ENCODE measurements at regions of chr20 and their contacts with region 1.

Region 1: DNA sequence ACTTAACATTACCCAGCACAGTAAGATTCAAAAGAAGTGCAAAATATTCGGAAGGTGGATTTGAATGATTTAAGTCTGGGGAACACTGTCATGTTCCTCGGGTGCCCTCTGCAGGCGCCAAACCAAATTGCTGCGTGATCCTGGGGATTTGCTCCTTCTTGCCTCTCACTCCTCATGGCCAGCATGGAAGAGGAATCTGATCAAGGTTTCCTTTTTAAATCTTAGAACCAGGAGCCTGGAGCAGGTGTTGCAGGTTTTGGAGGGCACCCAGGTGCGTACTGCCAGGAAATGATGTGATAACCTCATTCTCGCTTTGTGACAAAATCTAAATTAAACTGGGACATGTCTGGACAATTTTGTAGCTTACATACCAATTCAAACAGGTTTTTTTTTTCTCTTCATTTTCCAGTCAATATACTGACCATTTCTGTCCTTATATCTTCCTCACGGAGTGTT is 8.1 kb upstream of the PFDN4 start:
- DNase-seq: peak; percentile 81
- ATAC-seq: peak; percentile 76
- H3K4me3 Mint-ChIP-seq: no peak overlapping the region
- H3K27ac Mint-ChIP-seq: no peak overlapping the region
- H3K4me1 Mint-ChIP-seq: no peaks in the 10 kb centered on the region
- H3K27me3 Mint-ChIP-seq: peaks cover 3% of the 10 kb centered on the region
- CTCF ChIP-seq: peak; percentile 93

Region 2: DNA sequence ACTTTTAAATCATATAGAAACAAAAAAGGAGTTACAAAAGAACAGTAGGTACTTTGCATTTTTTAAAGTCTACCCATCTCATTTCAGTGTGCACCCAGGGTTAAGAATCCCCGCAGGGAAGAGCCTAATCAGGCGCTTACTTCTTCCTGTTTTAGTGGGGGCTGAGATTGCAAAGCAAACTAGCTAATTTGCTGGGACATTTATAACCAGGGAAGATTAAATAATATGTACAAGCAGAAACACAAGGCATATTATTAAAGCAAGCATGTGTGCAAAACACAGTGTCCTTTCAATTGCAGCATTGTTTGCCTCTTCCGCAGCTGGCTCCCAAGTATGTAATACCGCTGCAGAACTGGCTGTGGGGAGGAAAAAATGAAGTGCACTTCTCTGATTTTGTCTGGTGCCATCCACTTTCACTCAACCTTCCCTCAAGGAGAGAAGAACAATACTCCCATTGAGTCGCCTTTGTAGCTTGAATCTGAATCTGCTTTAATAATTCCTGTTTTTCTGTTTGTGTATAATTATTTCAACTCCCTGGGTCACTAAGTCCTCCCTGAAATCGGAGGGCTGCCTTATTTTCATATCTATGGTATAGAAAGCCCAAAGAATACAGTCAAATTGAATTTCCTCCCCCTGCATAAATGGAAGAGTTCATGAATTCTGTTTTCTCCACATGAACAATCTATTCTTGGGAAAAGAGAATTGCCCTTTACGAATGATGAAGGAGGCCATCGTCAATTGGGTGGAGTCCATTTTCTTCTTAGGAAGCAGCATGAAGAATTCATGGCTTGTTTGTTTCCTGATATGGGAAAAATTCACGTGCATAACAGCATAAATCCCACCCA is 106.1 kb before region 1 on chr20:
- CTCF ChIA-PET with region 1: interaction called, 106 read pairs
- POLR2A ChIA-PET with region 1: no interaction called
- intact Hi-C with region 1: loop called (anchors 2 kb)
- DNase-seq: no peak
- ATAC-seq: no peak
- H3K4me3 Mint-ChIP-seq: no peak overlapping the region
- H3K27ac Mint-ChIP-seq: no peak overlapping the region
- H3K4me1 Mint-ChIP-seq: no peaks in the 10 kb centered on the region
- H3K27me3 Mint-ChIP-seq: no peaks in the 10 kb centered on the region
- CTCF ChIP-seq: no peak

Region 3: DNA sequence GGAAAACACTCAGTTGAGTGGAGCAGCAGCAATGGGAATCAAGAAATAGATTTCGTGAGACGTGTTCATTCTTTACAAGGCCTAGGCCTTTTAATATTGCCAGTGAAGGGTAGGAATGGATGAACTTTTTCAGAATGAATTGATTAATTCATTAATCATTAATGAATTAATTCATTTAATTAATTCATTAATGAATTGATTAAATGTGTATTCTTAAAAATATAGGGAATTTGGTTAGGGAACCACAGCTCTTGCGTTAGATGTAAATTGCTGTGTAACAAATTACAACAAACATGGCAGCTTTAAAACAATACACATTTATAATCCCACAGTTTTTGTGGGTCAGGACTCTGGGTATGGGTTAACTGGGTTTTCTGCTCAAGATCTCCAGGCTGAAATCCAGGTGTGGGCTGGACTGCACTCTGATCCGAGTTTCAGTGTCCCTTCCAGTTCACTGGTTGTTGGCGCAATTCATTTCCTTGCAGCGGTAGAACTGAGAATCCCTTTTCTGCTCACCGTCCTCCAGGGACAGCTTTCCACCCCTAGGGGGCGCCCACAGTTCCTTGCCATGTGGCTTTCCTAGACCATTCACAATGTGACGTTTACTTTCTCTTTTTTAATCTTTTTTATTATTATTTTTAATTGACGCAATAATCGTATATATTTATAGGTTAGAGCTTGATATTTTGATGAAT is 96.5 kb before region 1 on chr20:
- CTCF ChIA-PET with region 1: interaction called, 130 read pairs
- POLR2A ChIA-PET with region 1: interaction called, 6 read pairs
- intact Hi-C with region 1: loop called (anchors 2 kb)
- DNase-seq: peak; percentile 86
- ATAC-seq: peak; percentile 73
- H3K4me3 Mint-ChIP-seq: no peak overlapping the region
- H3K27ac Mint-ChIP-seq: no peak overlapping the region
- H3K4me1 Mint-ChIP-seq: no peaks in the 10 kb centered on the region
- H3K27me3 Mint-ChIP-seq: no peaks in the 10 kb centered on the region
- CTCF ChIP-seq: peak; percentile 93

Region 4: GRCh38 chr20:54167909-54168872 is 31.6 kb before region 1 on chr20:
- CTCF ChIA-PET with region 1: interaction called, 10 read pairs
- POLR2A ChIA-PET with region 1: no interaction called
- intact Hi-C with region 1: no loop called
- DNase-seq: no peak
- ATAC-seq: no peak
- H3K4me3 Mint-ChIP-seq: no peak overlapping the region
- H3K27ac Mint-ChIP-seq: no peak overlapping the region
- H3K4me1 Mint-ChIP-seq: no peaks in the 10 kb centered on the region
- H3K27me3 Mint-ChIP-seq: peaks cover 47% of the 10 kb centered on the region
- CTCF ChIP-seq: no peak

Region 5: DNA sequence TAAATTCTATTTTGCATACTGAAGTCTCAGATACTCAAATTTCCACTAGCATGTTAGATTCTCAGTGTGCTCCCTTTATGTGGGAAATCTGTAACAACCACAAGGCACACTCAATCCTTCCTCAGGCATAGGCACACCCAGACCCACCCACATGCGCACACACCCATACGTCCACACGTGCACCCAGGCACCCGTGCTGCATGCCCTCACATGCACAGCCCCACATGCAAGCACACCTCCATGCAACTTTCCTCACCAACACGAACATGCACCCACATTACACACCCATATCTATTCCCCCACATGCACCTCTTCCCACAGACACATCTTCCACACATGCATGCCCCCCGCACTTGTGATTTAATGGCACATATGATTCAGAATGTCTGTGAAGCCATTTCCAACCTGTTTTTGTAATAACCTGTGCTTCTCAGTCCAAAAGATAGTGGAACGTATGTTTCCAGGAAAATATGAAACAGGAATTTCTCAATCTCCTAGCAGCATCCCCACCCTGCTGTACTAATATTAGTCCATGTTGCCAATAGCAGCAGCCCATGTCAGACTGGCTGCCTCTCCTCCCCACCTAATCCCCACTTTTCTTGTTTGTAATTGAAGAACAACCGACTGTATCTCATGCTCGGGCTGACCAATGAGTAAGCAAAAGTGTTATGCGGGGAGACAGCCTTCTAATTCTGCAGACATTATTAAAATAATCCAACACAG is 14.7 kb before region 1 on chr20:
- CTCF ChIA-PET with region 1: interaction called, 24 read pairs
- POLR2A ChIA-PET with region 1: no interaction called
- intact Hi-C with region 1: no loop called
- DNase-seq: no peak
- ATAC-seq: no peak
- H3K4me3 Mint-ChIP-seq: no peak overlapping the region
- H3K27ac Mint-ChIP-seq: no peak overlapping the region
- H3K4me1 Mint-ChIP-seq: no peaks in the 10 kb centered on the region
- H3K27me3 Mint-ChIP-seq: peaks cover 13% of the 10 kb centered on the region
- CTCF ChIP-seq: no peak

Measured in activated CD8-positive, alpha-beta T cell treated with anti-CD3 and anti-CD28 coated beads for 36 hours (primary cell).